ENCODE measurements at regions of chr16 and their contacts with region 1.

Region 1: DNA sequence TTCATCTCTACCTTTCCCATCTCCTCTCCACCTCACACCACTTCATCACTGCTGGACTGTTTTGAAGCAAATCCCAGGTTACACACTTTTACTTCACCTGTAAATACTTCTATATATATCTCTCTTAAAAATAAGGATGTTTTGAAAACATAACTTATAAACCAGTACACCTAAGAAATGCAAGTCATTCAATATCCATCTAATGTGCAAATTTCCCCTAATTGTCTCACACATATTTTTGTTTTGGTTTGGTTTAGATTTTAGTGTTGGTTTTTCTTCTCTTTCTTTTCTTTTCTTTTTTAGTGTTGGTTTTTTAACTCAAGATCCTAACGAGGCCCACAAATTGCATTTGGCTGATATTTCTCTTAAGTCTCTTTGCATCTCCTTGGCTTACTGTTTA is 17.9 kb upstream of the ZNF19 start:
- DNase-seq: no peak
- H3K4me3 ChIP-seq: no peak overlapping the region
- H3K27ac ChIP-seq: no peak overlapping the region
- H3K4me1 ChIP-seq: no peaks in the 10 kb centered on the region
- H3K27me3 ChIP-seq: no peaks in the 10 kb centered on the region
- CTCF ChIP-seq: no peak
- POLR2A ChIP-seq: no peak

Region 2: GRCh38 chr16:71585318-71585703 is 78.2 kb after region 1 on chr16:
- intact Hi-C with region 1: loop called (anchors 2 kb)
- DNase-seq: no peak
- H3K4me3 ChIP-seq: no peak overlapping the region
- H3K27ac ChIP-seq: peak overlapping the region; percentile 25 to 60
- H3K4me1 ChIP-seq: no peaks in the 10 kb centered on the region
- H3K27me3 ChIP-seq: peaks cover 0 to 5% of the 10 kb centered on the region in 2 donors
- CTCF ChIP-seq: no peak
- POLR2A ChIP-seq: no peak

Region 3: DNA sequence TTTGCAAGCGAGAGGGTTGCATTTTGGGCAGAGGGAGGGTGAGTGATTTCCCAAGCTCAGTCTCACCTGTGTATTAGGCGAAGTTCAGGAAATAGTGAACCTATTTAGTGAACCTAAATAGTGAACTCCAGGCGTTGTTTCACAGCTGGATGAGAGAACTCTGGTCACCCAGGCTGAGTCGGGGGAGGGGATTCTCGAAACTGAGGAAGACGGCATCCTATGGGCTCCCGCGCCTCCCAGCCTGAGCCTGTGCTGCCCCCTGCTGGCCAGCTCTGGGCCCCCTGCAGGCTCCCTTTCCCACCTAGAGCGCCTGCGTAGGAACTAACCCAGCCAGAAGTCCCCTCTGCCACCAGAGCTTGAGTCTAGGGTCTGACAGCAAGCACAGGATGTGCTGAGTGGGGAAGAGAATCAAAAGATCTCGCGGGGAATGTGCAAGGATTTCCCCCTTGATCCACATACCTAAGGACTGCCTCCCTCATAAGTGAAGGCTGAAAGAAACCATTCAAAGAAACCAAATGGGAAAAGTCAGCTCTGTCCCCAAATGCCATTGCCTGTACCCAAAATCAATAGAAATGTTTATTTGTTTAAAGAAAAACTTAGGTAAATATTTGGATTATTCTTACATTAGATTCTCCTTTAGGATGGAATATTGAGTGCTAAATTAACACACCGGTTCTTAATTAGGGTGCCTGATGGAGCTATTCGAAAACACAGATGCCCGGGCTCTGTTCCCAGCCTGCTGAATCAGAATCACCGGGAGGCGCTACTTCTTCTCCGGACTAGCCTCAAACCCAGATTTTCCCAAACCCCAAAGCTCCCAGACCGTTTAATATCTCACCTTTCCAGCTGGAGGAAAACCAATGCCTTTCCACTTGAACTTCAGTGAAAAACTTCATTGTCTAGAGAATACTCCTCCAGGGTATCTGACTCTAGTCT is 104.1 kb after region 1 on chr16:
- intact Hi-C with region 1: no loop called
- DNase-seq: peak; percentile 28 to 79
- H3K4me3 ChIP-seq: peak overlapping the region in 1 of 3 donors; percentile 6
- H3K27ac ChIP-seq: no peak overlapping the region
- H3K4me1 ChIP-seq: no peaks in the 10 kb centered on the region
- H3K27me3 ChIP-seq: no peaks in the 10 kb centered on the region
- CTCF ChIP-seq: peak; percentile 46 to 83 (median 82)
- POLR2A ChIP-seq: no peak

Region 4: DNA sequence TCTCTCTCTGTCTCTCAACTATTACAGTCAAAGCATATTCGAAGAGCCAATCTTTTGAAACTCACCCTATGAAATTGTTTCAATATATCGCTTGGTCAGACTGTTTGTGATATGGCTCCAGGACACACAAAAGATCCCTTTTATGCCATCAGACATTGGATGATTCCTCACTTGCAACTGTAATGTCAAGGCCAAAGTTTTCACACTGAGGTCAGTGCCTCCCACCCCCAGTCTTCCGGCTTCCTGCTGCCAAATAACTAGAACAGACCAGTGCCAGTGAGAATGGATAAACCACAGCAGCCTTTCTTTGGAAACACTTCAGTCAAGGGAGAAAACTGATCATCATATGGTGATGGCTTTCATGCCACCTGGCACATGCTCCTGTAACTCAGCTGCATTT is 1862.8 kb after region 1 on chr16:
- intact Hi-C with region 1: no loop called
- DNase-seq: no peak
- H3K4me3 ChIP-seq: no peak overlapping the region
- H3K27ac ChIP-seq: no peak overlapping the region
- H3K4me1 ChIP-seq: no peaks in the 10 kb centered on the region
- H3K27me3 ChIP-seq: peaks cover 0 to 3% of the 10 kb centered on the region in 2 donors
- CTCF ChIP-seq: no peak
- POLR2A ChIP-seq: no peak

Measured in breast epithelium (tissue), 4 donors.